ENCODE measurements at regions of chr17 and their contacts with region 1.

Region 1: GRCh38 chr17:81094509-81095382 is 59.8 kb downstream of the BAIAP2 start:
- DNase-seq: peak; percentile 98
- H3K4me3 ChIP-seq: peak overlapping the region; percentile 27
- CTCF ChIP-seq: no peak

Region 2: GRCh38 chr17:80991645-80992076 is 103.1 kb before region 1 on chr17 and contains the start of gene CHMP6:
- CTCF ChIA-PET with region 1: interaction called, 135 read pairs
- POLR2A ChIA-PET with region 1: no interaction called
- DNase-seq: no peak
- H3K4me3 ChIP-seq: peak within 1 kb of the TSS; percentile 70
- CTCF ChIP-seq: no peak

Region 3: GRCh38 chr17:81018044-81018802 is 76.5 kb before region 1 on chr17:
- CTCF ChIA-PET with region 1: interaction called, 178 read pairs
- POLR2A ChIA-PET with region 1: no interaction called
- DNase-seq: no peak
- H3K4me3 ChIP-seq: peak overlapping the region; percentile 19
- CTCF ChIP-seq: no peak

Region 4: GRCh38 chr17:81034779-81035388 is 59.9 kb before region 1 on chr17 and contains the start of gene BAIAP2:
- CTCF ChIA-PET with region 1: interaction called, 35 read pairs
- POLR2A ChIA-PET with region 1: interaction called, 5 read pairs
- DNase-seq: no peak
- H3K4me3 ChIP-seq: peak within 1 kb of the TSS; percentile 78
- CTCF ChIP-seq: no peak

Region 5: DNA sequence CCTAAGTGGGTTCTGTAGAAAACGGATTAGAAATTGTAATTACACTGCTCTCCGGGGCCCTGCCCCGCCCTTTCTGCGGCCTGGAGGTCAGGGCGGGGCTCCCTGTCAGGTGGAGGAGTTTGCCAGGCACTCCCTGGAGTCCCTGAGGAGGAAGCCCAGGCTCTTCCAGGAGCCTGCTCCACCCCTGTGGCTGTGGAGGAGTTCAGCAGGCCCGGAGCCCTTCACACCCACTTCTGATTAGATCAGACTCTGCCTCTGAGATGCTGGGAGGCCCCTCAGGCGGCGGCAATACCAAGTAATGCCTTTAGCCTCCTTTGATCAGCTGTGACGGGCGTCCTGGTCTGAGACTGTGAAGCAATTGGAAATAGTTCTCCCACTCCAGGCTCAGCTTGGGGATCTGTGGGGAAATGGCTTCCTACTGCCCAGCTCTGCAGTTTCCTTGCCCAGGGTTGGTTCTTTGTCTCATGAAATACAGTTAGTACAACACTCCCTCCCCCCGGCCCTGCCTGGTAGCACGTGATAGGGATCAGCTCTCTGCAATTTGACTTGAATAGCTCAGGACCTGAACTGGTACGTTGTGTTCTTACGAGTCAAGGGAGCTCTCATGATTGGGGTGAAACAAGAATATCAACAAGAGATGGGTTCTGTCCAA is 37.5 kb before region 1 on chr17:
- CTCF ChIA-PET with region 1: interaction called, 10 read pairs
- POLR2A ChIA-PET with region 1: no interaction called
- DNase-seq: no peak
- H3K4me3 ChIP-seq: no peak overlapping the region
- CTCF ChIP-seq: no peak

Region 6: GRCh38 chr17:81083125-81083765 is 11.5 kb before region 1 on chr17:
- CTCF ChIA-PET with region 1: interaction called, 23 read pairs
- POLR2A ChIA-PET with region 1: no interaction called
- DNase-seq: no peak
- H3K4me3 ChIP-seq: no peak overlapping the region
- CTCF ChIP-seq: no peak

Region 7: DNA sequence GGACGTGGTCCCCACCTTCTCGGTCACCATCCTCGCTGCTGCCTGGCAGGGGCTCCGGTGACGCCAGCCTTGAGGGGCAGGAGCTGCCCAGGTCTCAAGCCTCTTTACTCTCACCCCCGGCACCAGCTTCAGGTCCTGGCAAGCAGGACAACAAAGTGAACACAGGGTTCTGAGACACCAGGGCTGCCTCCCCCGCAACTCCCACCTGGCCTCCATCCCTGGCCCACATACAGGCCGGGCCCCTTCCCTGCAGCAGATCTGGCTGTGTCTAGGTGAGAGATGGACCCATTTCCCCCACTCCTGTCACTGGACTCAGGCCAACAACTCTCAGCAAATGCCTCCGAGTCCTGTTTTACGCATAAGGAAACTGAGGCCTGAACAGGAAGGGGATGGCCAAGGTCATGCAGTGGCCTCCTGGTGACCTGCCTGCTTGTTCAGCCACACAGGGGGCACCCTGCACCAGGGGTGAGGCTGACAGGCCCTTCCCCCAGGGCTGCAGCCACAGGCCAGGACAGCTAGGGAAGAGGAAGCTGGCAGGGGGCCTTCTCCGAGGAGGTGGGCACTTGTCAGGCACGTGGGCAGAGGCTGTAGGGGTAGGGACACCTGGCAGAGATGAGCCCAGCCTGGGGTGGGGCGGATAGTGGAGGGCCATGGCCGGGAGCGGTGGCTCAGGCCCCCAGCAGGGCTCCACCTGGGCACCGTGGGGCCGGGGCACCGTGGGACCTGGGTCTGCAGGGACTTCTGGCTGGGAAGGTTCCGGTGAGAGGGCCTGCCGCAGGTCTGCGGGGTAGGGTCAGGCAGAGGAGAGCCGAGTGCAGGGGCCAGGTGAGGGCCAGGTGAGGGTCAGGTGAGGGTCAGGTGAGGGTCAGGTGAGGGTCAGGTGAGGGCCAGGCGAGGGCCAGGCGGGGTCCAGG is 23.8 kb after region 1 on chr17:
- CTCF ChIA-PET with region 1: interaction called, 50 read pairs
- POLR2A ChIA-PET with region 1: no interaction called
- DNase-seq: no peak
- H3K4me3 ChIP-seq: peak overlapping the region; percentile 65
- CTCF ChIP-seq: no peak